Transverse colon (tissue), 4 donors: ENCODE measurements at regions of chr19 and their contacts with region 1.

Region 1: GRCh38 chr19:14571695-14572490 is at the start of gene NDUFB7:
- DNase-seq: peak; percentile 93
- H3K4me3 ChIP-seq: peak within 1 kb of the TSS; percentile 83 to 93 (median 86)
- H3K27ac ChIP-seq: peak within 1 kb of the TSS; percentile 84 to 88 (median 85)
- H3K4me1 ChIP-seq: peaks cover 16 to 49% (median 33%) of the 10 kb centered on the region in 4 donors
- H3K27me3 ChIP-seq: no peaks in the 10 kb centered on the region
- CTCF ChIP-seq: peak; percentile 58 to 81 (median 67)
- EP300 ChIP-seq: no peak
- POLR2A ChIP-seq: peak; percentile 71
- total RNA-seq, gene NDUFB7: 380 to 710 (median 454) TPM

Region 2: GRCh38 chr19:14689598-14690503 is 118.0 kb after region 1 on chr19 and contains the start of gene ZNF333:
- in situ Hi-C with region 1: loop called (anchors 10 kb)
- intact Hi-C with region 1: loop called (anchors 2 kb)
- DNase-seq: peak; percentile 99
- H3K4me3 ChIP-seq: peak within 1 kb of the TSS; percentile 55 to 82 (median 68)
- H3K27ac ChIP-seq: peak within 1 kb of the TSS; percentile 90 to 94 (median 92)
- H3K4me1 ChIP-seq: peaks cover 0 to 10% (median 7%) of the 10 kb centered on the region in 4 donors
- H3K27me3 ChIP-seq: no peaks in the 10 kb centered on the region
- CTCF ChIP-seq: no peak
- EP300 ChIP-seq: no peak
- POLR2A ChIP-seq: peak; percentile 55
- total RNA-seq, gene ZNF333: 10.1 to 31.4 (median 16.1) TPM

Region 3: GRCh38 chr19:14890643-14891379 is 318.9 kb after region 1 on chr19:
- in situ Hi-C with region 1: loop called in 2 of 4 experiments (anchors 10 to 25 kb)
- intact Hi-C with region 1: no loop called
- DNase-seq: peak; percentile 8
- H3K4me3 ChIP-seq: no peak overlapping the region
- H3K27ac ChIP-seq: no peak overlapping the region
- H3K4me1 ChIP-seq: peaks cover 0 to 7% (median 2%) of the 10 kb centered on the region in 4 donors
- H3K27me3 ChIP-seq: peaks cover 4% of the 10 kb centered on the region
- CTCF ChIP-seq: no peak
- EP300 ChIP-seq: no peak
- POLR2A ChIP-seq: no peak